Gastrocnemius medialis (tissue), 4 donors: ENCODE measurements at regions of chr1 and their contacts with region 1.

Region 1: GRCh38 chr1:150730130-150730721 is 9.5 kb upstream of the HORMAD1 start:
- DNase-seq: no peak
- ATAC-seq: no peak
- H3K4me3 ChIP-seq: no peak overlapping the region
- H3K27ac ChIP-seq: no peak overlapping the region
- H3K4me1 ChIP-seq: no peaks in the 10 kb centered on the region
- H3K27me3 ChIP-seq: no peaks in the 10 kb centered on the region
- CTCF ChIP-seq: no peak
- POLR2A ChIP-seq: no peak

Region 2: DNA sequence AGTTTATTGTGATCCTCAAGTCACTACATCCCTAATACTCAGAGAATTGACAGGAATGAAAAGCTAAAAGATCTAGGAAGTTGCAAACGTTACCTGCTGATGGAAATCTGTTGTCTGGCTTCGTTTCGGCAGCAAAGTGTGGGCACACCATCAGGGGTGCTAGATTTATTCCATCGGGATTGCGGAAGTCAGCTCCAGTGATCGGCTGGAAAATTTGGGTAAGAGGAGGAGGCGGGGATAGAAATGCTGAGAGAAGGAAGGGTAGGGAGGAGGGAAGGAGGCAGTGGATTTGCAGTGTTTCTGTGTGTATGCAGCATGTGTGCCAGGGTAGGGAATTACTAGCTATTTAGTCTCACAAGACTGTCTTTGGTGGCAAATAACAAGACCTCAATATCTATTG is 77.9 kb after region 1 on chr1 and contains the start of gene CTSK:
- in situ Hi-C with region 1: no loop called
- intact Hi-C with region 1: loop called (anchors 2 kb)
- DNase-seq: peak in 1 of 2 donors; percentile 20
- ATAC-seq: peak in 1 of 2 donors; percentile 47
- H3K4me3 ChIP-seq: peak within 1 kb of the TSS; percentile 7 to 32 (median 20)
- H3K27ac ChIP-seq: peak within 1 kb of the TSS in 3 of 4 donors; percentile 2 to 35 (median 22)
- H3K4me1 ChIP-seq: peaks cover 0 to 3% of the 10 kb centered on the region in 2 donors
- H3K27me3 ChIP-seq: no peaks in the 10 kb centered on the region
- CTCF ChIP-seq: no peak
- POLR2A ChIP-seq: no peak
- total RNA-seq, gene CTSK: 8.4 to 20.2 (median 17.7) TPM